Heart right ventricle (tissue), 16 donors: ENCODE measurements at regions of chr3 and their contacts with region 1.

Region 1: GRCh38 chr3:127822698-127823425 is 547 bp upstream of the MGLL start:
- DNase-seq: peak; percentile 39 to 77
- ATAC-seq: peak; percentile 73 to 87 (median 83)
- H3K4me3 ChIP-seq: peak overlapping the region; percentile 32 to 92 (median 84)
- H3K27ac ChIP-seq: peak overlapping the region; percentile 74 to 98 (median 95)
- H3K4me1 ChIP-seq: peaks cover 5 to 48% (median 32%) of the 10 kb centered on the region in 9 donors
- H3K27me3 ChIP-seq: no peaks in the 10 kb centered on the region
- CTCF ChIP-seq: peak in 6 of 9 donors; percentile 12 to 57 (median 38)

Region 2: GRCh38 chr3:127590593-127591477 is 232.0 kb before region 1 on chr3 and contains the start of gene TPRA1:
- intact Hi-C with region 1: loop called in 1 of 10 experiments (anchors 10 kb)
- DNase-seq: peak; percentile 85 to 94
- ATAC-seq: peak; percentile 90 to 96 (median 94)
- H3K4me3 ChIP-seq: peak within 1 kb of the TSS; percentile 53 to 96 (median 92)
- H3K27ac ChIP-seq: peak within 1 kb of the TSS; percentile 81 to 95 (median 94)
- H3K4me1 ChIP-seq: peaks cover 19 to 55% (median 41%) of the 10 kb centered on the region in 9 donors
- H3K27me3 ChIP-seq: no peaks in the 10 kb centered on the region
- CTCF ChIP-seq: peak in 6 of 9 donors; percentile 16 to 58 (median 36)
- total RNA-seq, gene TPRA1: 11.0 to 24.2 (median 16.3) TPM

Region 3: GRCh38 chr3:127637546-127637945 is 185.3 kb before region 1 on chr3:
- intact Hi-C with region 1: no loop called
- DNase-seq: no peak
- ATAC-seq: no peak
- H3K4me3 ChIP-seq: no peak overlapping the region
- H3K27ac ChIP-seq: no peak overlapping the region
- H3K4me1 ChIP-seq: no peaks in the 10 kb centered on the region
- H3K27me3 ChIP-seq: peaks cover 0 to 7% (median 3%) of the 10 kb centered on the region in 7 donors
- CTCF ChIP-seq: no peak

Region 4: GRCh38 chr3:127672516-127673190 is 150.2 kb before region 1 on chr3 and contains the start of gene ABTB1:
- intact Hi-C with region 1: loop called in 1 of 10 experiments (anchors 5 kb)
- DNase-seq: peak; percentile 82 to 89
- ATAC-seq: peak; percentile 82 to 95 (median 86)
- H3K4me3 ChIP-seq: peak within 1 kb of the TSS; percentile 63 to 99 (median 85)
- H3K27ac ChIP-seq: peak within 1 kb of the TSS; percentile 86 to 99 (median 93)
- H3K4me1 ChIP-seq: peaks cover 7 to 40% (median 29%) of the 10 kb centered on the region in 9 donors
- H3K27me3 ChIP-seq: no peaks in the 10 kb centered on the region
- CTCF ChIP-seq: no peak
- total RNA-seq, gene ABTB1: 19.6 to 47.9 (median 23.9) TPM

Region 5: DNA sequence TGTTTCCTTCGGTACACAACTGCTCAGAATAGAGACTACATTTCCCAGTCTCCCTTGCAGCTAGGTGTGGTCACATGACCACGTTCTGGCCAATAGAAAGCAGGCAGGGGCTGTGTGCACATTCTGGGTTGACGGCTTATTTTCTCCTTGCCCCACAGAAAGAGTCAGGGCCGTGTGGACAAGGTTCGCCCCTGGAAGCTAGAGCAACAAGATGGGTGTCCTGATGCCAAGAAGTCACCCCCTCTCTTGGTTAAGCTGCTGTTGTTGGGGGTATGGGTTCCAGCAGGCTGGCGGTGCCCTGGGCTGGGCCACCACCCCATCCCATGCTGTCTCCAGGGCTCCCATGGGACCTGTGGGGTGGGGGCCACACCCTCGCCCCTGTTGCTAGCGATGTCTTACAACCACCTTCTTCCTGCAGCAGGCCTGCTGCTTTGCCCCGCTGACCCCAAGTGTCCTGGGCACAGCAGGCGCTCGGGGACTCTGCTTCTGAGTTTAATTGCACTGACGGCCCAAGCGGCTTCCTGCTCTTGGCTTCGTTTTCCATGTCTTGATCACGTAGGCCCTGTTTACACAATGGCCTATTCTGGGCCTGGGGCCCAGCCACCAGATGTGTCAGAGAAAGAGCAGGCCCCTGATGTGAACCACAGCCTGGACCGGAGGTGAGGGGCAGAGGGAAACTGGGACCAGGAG is 125.2 kb before region 1 on chr3:
- intact Hi-C with region 1: loop called in 8 of 10 experiments (anchors 2 to 10 kb)
- DNase-seq: peak; percentile 83 to 90
- ATAC-seq: peak; percentile 70 to 78 (median 75)
- H3K4me3 ChIP-seq: peak overlapping the region in 3 of 10 donors; percentile 23 to 29 (median 25)
- H3K27ac ChIP-seq: peak overlapping the region; percentile 89 to 99 (median 95)
- H3K4me1 ChIP-seq: peaks cover 55 to 86% (median 65%) of the 10 kb centered on the region in 9 donors
- H3K27me3 ChIP-seq: no peaks in the 10 kb centered on the region
- CTCF ChIP-seq: no peak

Region 6: DNA sequence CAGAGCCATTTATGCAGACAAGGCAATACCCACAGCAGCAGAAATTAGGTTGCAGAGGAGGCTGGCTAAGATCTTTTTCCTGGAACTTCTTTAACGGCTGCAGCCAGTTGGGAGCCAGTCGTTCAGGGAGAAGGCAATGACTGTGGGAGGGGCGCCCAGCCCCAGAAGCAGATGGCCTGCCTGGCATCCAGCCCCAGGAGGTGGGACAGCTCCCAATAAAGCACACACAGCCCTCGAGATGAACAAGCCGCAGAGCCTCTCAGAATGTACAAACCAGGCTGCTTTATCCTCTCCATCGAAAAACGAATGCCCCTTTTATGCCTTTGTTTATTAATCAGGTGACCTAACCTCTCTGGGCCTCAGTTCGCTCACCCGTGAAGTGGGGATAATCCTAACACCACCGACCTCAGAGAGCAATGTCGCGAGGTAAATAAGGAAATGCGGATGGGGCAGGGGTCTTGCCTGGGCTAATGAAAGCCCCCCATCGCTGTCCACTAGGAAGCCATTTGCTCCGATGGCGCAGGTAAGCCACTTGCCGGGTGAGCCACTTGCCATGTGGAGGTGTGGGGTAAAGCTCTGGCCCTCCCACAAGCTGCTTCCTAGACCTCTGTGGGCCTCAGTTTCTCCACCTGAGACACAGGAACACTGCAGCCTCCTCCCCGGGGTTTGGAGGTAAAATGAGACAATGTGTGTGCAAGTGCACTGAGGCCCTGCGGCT is 36.4 kb before region 1 on chr3:
- intact Hi-C with region 1: loop called in 3 of 10 experiments (anchors 5 kb)
- DNase-seq: peak; percentile 85 to 87
- ATAC-seq: peak; percentile 76 to 87 (median 84)
- H3K4me3 ChIP-seq: no peak overlapping the region
- H3K27ac ChIP-seq: peak overlapping the region; percentile 21 to 91 (median 64)
- H3K4me1 ChIP-seq: peaks cover 37 to 99% (median 80%) of the 10 kb centered on the region in 9 donors
- H3K27me3 ChIP-seq: no peaks in the 10 kb centered on the region
- CTCF ChIP-seq: no peak

Region 7: DNA sequence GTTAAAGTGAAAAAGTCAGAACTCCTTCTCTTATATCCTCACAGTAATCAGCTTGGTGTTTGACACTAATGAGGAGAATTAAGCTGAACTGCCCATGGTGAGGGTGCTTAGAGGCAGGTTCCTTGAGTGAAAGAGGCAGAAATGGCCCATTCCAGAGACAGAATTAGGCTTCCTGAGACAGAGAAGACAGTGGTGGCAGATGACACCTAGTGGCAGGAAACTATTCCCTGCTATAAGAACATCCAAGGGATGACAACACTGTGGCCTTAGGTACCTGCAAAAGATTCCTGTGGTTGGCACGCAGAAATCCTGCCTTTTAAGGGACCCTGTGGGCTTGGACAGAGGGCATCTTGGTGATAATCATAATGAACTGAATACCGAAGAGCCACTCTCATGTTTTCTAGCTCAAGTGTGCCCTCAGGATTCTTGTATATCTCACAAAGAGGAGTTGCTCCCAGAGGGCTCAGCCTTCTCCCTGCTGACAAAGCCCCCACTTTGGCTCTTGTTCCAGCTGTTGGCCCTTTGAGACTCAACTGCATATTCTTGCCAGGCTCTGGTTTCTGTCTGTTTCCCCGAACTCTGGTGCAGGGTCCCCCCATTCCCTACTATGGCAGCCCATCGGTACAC is 148.2 kb after region 1 on chr3:
- intact Hi-C with region 1: no loop called
- DNase-seq: peak in 1 of 2 donors; percentile 28
- ATAC-seq: peak; percentile 69 to 87 (median 79)
- H3K4me3 ChIP-seq: no peak overlapping the region
- H3K27ac ChIP-seq: no peak overlapping the region
- H3K4me1 ChIP-seq: peaks cover 0 to 9% (median 0%) of the 10 kb centered on the region in 9 donors
- H3K27me3 ChIP-seq: no peaks in the 10 kb centered on the region
- CTCF ChIP-seq: peak; percentile 59 to 82 (median 70)